ENCODE measurements at regions of chr20 and their contacts with region 1.

Region 1: DNA sequence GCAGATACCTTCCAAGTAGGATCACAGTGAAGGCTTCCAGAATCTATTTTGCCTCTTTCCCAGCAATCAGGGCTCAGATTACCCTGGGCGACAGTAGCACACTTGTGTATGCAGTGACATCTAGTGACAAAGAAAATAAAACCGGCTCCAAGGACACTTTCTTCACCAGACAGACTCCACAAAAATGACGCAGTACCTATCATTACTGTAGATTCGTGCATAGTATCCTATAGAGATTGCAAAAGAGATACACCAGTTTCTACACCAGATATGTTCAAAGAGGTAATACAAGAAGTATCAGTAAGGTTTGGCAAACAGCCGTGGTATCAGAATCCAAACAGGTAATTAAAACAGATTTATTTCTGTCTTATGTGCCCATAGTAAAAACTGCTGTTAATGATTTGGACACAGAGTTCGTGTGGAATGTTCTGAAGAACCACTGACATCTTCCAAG is 600.4 kb upstream of the JAG1 start:
- DNase-seq: peak; percentile 89
- ATAC-seq: peak; percentile 97
- H3K4me3 ChIP-seq: no peak overlapping the region
- H3K27ac ChIP-seq: no peak overlapping the region
- H3K4me1 ChIP-seq: peaks cover 7% of the 10 kb centered on the region
- H3K27me3 ChIP-seq: no peaks in the 10 kb centered on the region
- CTCF ChIP-seq: peak; percentile 93

Region 2: GRCh38 chr20:10553326-10553984 is 720.7 kb before region 1 on chr20:
- CTCF ChIA-PET with region 1: no interaction called
- POLR2A ChIA-PET with region 1: no interaction called
- intact Hi-C with region 1: loop called (anchors 1 kb)
- DNase-seq: peak; percentile 91
- ATAC-seq: peak; percentile 64
- H3K4me3 ChIP-seq: no peak overlapping the region
- H3K27ac ChIP-seq: peak overlapping the region; percentile 96
- H3K4me1 ChIP-seq: peaks cover 50% of the 10 kb centered on the region
- H3K27me3 ChIP-seq: no peaks in the 10 kb centered on the region
- CTCF ChIP-seq: peak; percentile 96

Region 3: GRCh38 chr20:11098888-11099287 is 175.3 kb before region 1 on chr20:
- CTCF ChIA-PET with region 1: no interaction called
- POLR2A ChIA-PET with region 1: no interaction called
- intact Hi-C with region 1: loop called (anchors 1 kb)
- DNase-seq: peak; percentile 62
- ATAC-seq: peak; percentile 80
- H3K4me3 ChIP-seq: no peak overlapping the region
- H3K27ac ChIP-seq: no peak overlapping the region
- H3K4me1 ChIP-seq: peaks cover 8% of the 10 kb centered on the region
- H3K27me3 ChIP-seq: no peaks in the 10 kb centered on the region
- CTCF ChIP-seq: peak; percentile 68

Region 4: DNA sequence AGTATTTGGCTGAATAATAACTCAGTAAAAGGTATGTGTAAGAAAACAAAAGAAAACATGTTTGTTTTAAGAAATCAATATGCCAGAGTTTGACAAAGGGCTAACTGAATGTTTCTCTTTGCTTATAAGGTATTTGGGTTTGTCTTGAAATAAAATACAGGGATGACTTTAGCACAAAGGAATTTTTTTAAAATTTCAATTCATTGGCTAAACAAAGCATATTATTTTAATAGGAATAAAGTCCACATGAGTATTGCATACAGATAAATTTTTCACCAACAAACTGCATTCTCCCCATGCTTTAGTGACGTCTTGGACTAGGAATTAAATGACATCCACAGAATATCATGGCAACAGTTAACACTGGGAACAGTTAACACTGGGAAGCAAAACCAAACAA is 120.3 kb before region 1 on chr20:
- CTCF ChIA-PET with region 1: no interaction called
- POLR2A ChIA-PET with region 1: no interaction called
- intact Hi-C with region 1: loop called (anchors 1 kb)
- DNase-seq: peak; percentile 82
- ATAC-seq: peak; percentile 70
- H3K4me3 ChIP-seq: no peak overlapping the region
- H3K27ac ChIP-seq: peak overlapping the region; percentile 63
- H3K4me1 ChIP-seq: peaks cover 49% of the 10 kb centered on the region
- H3K27me3 ChIP-seq: no peaks in the 10 kb centered on the region
- CTCF ChIP-seq: no peak

Region 5: DNA sequence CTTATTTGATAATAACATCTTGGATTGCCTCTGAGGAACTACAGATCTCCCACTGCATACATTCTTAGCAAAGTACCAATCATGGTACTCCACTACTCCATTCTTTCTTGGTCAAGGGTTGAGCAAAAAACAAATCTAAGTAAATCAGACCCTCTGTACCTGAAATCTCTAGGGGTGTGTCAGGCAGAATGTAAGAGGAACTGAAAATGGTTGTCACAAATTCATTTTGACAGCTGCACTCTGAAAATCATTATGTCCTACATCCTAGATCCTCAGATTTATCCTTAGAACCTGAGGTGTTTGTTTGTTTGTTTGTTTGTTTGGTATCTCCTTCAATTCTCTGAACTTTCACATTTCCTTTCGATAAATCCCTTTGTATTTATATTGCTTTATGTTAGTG is 210.3 kb after region 1 on chr20:
- CTCF ChIA-PET with region 1: no interaction called
- POLR2A ChIA-PET with region 1: no interaction called
- intact Hi-C with region 1: no loop called
- DNase-seq: no peak
- ATAC-seq: no peak
- H3K4me3 ChIP-seq: no peak overlapping the region
- H3K27ac ChIP-seq: no peak overlapping the region
- H3K4me1 ChIP-seq: no peaks in the 10 kb centered on the region
- H3K27me3 ChIP-seq: no peaks in the 10 kb centered on the region
- CTCF ChIP-seq: no peak

Measured in PC-3 (cell line).